ENCODE measurements at regions of chr12 and their contacts with region 1.

Region 1: DNA sequence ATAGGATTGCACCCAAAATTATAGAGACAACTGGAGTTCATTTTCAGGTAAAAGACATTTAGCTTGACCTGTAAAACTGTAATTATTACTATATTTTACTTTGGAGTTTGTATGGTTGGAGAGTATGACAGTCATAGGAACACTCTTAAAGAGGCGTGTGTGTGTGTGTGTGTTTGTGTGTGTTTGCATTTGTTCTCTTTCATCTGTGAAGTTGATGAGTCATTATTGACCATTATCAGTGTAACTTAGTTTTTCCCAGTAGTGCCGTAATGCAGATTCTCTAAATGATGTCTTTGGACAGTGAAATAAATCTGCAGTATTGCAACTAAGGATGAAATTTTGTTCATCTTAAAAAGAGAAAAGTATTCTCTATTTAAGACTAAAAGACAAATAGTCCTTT is 13.0 kb downstream of the WASHC4 start:
- DNase-seq: no peak
- ATAC-seq: no peak
- H3K4me3 ChIP-seq: no peak overlapping the region
- H3K4me3 Mint-ChIP-seq: no peak overlapping the region
- H3K27ac ChIP-seq: no peak overlapping the region
- H3K27ac Mint-ChIP-seq: no peak overlapping the region
- H3K4me1 ChIP-seq: no peaks in the 10 kb centered on the region
- H3K4me1 Mint-ChIP-seq: no peaks in the 10 kb centered on the region
- H3K27me3 ChIP-seq: no peaks in the 10 kb centered on the region
- H3K27me3 Mint-ChIP-seq: no peaks in the 10 kb centered on the region
- CTCF ChIP-seq: no peak

Region 2: DNA sequence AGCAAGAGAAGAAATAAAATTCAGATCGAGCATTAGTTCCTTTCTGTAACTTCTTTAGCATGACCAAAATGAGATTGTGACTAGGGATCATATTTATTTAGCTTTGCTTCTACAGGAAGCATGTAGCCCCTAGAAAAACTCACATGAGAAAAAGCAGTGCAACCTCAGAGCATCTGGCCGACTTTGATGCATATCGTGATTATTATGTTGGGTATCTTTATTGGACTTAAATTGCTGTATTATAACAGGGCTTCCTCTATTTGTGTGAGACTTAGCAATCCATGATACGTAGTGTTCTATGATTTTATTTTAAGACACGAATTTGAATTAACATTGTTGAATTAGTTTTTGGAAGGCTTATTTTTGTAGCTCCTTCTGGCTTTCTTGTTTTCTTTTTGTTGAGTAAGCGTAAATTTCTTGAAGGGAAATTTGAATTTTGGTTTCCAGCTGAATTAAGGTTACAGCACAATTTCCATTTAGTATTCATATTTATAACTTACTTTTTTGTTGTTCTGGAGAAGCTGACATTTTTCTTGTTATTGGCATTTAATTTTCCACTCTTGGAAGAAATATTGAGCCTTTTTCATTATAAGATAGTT is 20.9 kb after region 1 on chr12:
- CTCF ChIA-PET with region 1: no interaction called
- POLR2A ChIA-PET with region 1: no interaction called
- intact Hi-C with region 1: loop called in 1 of 2 experiments (anchors 1 kb)
- DNase-seq: no peak
- ATAC-seq: no peak
- H3K4me3 ChIP-seq: no peak overlapping the region
- H3K4me3 Mint-ChIP-seq: no peak overlapping the region
- H3K27ac ChIP-seq: no peak overlapping the region
- H3K27ac Mint-ChIP-seq: peak overlapping the region; percentile 55
- H3K4me1 ChIP-seq: no peaks in the 10 kb centered on the region
- H3K4me1 Mint-ChIP-seq: peaks cover 15% of the 10 kb centered on the region
- H3K27me3 ChIP-seq: no peaks in the 10 kb centered on the region
- H3K27me3 Mint-ChIP-seq: no peaks in the 10 kb centered on the region
- CTCF ChIP-seq: no peak

Region 3: DNA sequence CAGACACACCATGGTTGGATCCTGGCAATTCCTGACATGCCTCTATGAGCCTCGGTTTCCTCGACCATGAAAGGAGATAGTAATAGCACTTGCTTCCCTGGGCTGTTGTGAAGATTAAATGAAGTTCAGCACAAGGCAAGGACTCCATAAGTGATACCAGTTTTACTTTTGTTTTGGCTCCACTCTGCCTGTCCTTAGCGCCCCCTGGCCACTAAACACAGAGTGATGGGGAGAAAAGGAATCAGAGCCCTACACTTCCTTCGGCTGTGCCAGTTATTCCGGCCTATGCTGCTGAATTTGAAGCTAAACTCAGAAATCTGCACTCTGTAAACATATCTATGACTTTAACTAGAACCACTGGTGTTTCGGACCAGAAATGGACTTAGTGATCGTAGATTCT is 383.7 kb after region 1 on chr12:
- CTCF ChIA-PET with region 1: no interaction called
- POLR2A ChIA-PET with region 1: no interaction called
- intact Hi-C with region 1: no loop called
- DNase-seq: no peak
- ATAC-seq: no peak
- H3K4me3 ChIP-seq: no peak overlapping the region
- H3K4me3 Mint-ChIP-seq: no peak overlapping the region
- H3K27ac ChIP-seq: no peak overlapping the region
- H3K27ac Mint-ChIP-seq: no peak overlapping the region
- H3K4me1 ChIP-seq: no peaks in the 10 kb centered on the region
- H3K4me1 Mint-ChIP-seq: no peaks in the 10 kb centered on the region
- H3K27me3 ChIP-seq: no peaks in the 10 kb centered on the region
- H3K27me3 Mint-ChIP-seq: peaks cover 16% of the 10 kb centered on the region
- CTCF ChIP-seq: no peak

Region 4: DNA sequence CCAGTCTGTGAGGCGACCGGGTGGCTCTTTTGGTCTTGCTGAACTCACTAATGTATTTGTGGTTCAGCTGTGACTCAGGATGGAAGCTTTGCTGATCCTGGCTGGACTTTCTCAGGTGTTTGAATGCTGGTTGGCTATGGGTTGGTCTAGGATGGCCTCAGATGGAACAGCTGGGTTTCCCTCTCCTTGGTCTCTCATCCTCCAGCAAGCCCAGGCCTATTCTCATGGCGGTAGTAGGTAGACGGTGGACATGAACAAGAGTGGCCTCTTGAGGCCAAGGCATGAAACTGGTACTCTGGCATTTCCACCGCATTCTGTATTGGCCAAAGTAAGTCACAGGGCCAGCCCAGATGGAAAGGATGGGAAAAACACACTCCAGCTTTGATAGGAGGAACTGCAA is 1225.2 kb after region 1 on chr12:
- CTCF ChIA-PET with region 1: no interaction called
- POLR2A ChIA-PET with region 1: no interaction called
- intact Hi-C with region 1: loop called in 1 of 2 experiments (anchors 10 kb)
- DNase-seq: peak in 2 of 9 experiments; percentile 33 to 41
- ATAC-seq: peak; percentile 38
- H3K4me3 ChIP-seq: no peak overlapping the region
- H3K4me3 Mint-ChIP-seq: no peak overlapping the region
- H3K27ac ChIP-seq: no peak overlapping the region
- H3K27ac Mint-ChIP-seq: peak overlapping the region; percentile 53
- H3K4me1 ChIP-seq: no peaks in the 10 kb centered on the region
- H3K4me1 Mint-ChIP-seq: no peaks in the 10 kb centered on the region
- H3K27me3 ChIP-seq: no peaks in the 10 kb centered on the region
- H3K27me3 Mint-ChIP-seq: no peaks in the 10 kb centered on the region
- CTCF ChIP-seq: no peak